Right cardiac atrium (tissue), 5 donors: ENCODE measurements at regions of chr7 and their contacts with region 1.

Region 1: GRCh38 chr7:25851332-25852210 is 300.4 kb upstream of the NFE2L3 start:
- DNase-seq: peak; percentile 79 to 93 (median 91)
- ATAC-seq: peak; percentile 70 to 80
- H3K4me3 ChIP-seq: no peak overlapping the region
- H3K27ac ChIP-seq: no peak overlapping the region
- H3K4me1 ChIP-seq: peaks cover 1% of the 10 kb centered on the region
- H3K27me3 ChIP-seq: no peaks in the 10 kb centered on the region

Region 2: DNA sequence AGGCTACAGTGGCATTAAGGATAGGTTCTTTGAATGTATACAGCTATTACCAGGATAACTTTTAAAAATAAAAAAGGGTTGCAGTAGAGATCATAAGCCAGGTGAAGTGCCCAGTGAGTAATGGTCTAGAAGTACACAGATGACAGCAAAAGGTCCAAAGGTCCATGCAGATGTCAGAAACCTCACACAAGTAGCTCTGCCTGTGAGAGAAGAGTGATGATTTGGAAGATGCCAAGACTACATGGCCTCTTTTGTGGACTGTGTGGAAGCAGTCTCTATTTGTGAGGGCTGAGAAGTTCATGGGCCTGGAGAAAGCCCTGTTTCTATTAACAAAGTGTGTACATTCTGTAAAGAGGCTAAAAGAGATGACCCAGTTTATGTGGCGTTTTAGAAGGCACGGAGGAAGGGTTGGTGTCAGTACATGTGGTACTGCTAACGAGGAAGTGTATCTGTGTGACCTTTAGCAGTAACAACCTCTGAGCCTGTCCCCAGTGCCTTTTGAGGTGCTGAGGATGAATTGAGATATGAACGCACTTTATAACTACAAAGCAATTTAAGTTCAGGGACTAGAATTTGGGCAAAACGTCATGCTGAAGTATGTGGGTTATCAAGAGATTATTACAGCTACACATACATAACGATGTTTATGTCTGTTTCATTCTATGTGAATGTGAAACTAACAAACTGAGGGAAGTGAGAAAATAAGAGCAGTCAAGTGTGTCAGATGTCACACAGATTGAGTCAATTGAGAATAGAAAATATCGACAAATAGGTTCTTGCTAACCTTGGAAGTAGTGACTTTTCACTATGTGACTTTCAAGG is 734.1 kb before region 1 on chr7:
- intact Hi-C with region 1: no loop called
- DNase-seq: no peak
- ATAC-seq: peak; percentile 36 to 38
- H3K4me3 ChIP-seq: no peak overlapping the region
- H3K27ac ChIP-seq: peak overlapping the region; percentile 19
- H3K4me1 ChIP-seq: peaks cover 3% of the 10 kb centered on the region
- H3K27me3 ChIP-seq: no peaks in the 10 kb centered on the region

Region 3: DNA sequence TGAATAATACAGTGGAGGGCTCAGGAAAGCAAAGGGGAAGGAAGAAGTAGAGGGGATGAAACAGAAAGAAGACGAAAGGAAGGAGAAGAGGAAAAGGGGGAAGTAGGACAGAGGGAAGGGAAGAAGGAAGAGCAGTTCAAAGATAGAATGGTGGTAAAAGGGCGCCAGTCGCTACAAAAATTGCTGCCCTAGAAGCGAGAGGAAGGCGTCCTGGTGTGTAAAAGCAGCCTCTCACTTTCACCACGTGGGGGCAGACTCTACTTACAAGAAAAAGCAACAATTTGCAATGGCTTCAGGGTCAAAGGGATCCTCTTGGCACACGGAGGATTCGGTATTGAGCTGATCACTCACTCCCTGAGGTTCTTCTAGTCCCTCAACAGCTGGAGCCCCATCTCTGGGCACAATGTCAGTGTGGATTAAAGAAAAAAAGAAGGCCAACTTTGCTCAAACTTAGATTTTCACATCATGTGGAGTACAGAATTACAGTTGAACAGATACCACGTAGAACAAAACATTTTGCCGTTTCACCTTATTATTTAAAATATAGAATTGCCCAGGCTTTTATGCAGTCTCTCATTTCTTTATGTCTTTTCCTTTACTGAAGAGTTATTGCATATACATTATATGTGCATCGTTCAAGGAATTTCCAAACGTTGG is 591.9 kb before region 1 on chr7:
- intact Hi-C with region 1: loop called in 3 of 4 experiments (anchors 5 to 10 kb)
- DNase-seq: peak in 2 of 3 donors; percentile 33 to 82
- ATAC-seq: peak; percentile 77 to 80
- H3K4me3 ChIP-seq: no peak overlapping the region
- H3K27ac ChIP-seq: no peak overlapping the region
- H3K4me1 ChIP-seq: no peaks in the 10 kb centered on the region
- H3K27me3 ChIP-seq: no peaks in the 10 kb centered on the region

Region 4: DNA sequence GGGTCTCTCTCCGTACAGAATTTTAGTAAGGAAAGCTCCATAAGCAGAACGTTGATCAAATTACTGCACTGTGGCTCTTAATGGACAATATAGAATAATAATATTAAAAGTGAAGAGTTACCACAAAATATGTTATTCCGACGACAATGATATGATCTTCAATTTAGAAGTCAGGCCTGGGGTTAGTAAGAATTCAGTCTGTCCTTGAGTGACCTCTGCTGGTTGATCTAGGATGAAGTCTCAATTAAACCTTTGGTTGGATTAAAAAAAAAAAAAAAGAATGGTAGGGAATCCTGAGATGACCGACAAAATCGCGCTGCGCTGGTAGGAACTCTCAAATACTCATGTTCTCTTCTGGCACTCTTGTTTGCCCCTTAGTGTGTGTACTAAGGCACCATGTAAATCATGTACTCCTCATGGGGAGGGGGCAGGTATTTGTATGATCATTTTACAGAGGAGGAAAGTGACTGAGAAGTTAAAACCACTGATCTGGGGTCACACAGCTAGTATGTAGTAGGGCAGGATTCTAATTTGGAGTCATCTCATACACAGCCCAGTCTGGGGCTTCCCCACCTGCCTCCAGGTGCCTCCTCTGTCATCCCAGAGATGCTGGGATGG is 462.0 kb before region 1 on chr7:
- intact Hi-C with region 1: loop called (anchors 2 to 5 kb)
- DNase-seq: peak in 1 of 3 donors; percentile 45
- ATAC-seq: peak in 1 of 2 donors; percentile 41
- H3K4me3 ChIP-seq: no peak overlapping the region
- H3K27ac ChIP-seq: no peak overlapping the region
- H3K4me1 ChIP-seq: peaks cover 2% of the 10 kb centered on the region
- H3K27me3 ChIP-seq: no peaks in the 10 kb centered on the region

Region 5: GRCh38 chr7:25565949-25566348 is 285.6 kb before region 1 on chr7:
- intact Hi-C with region 1: loop called in 3 of 4 experiments (anchors 2 to 5 kb)
- DNase-seq: peak; percentile 29 to 81 (median 68)
- ATAC-seq: no peak
- H3K4me3 ChIP-seq: no peak overlapping the region
- H3K27ac ChIP-seq: no peak overlapping the region
- H3K4me1 ChIP-seq: peaks cover 2% of the 10 kb centered on the region
- H3K27me3 ChIP-seq: no peaks in the 10 kb centered on the region

Region 6: DNA sequence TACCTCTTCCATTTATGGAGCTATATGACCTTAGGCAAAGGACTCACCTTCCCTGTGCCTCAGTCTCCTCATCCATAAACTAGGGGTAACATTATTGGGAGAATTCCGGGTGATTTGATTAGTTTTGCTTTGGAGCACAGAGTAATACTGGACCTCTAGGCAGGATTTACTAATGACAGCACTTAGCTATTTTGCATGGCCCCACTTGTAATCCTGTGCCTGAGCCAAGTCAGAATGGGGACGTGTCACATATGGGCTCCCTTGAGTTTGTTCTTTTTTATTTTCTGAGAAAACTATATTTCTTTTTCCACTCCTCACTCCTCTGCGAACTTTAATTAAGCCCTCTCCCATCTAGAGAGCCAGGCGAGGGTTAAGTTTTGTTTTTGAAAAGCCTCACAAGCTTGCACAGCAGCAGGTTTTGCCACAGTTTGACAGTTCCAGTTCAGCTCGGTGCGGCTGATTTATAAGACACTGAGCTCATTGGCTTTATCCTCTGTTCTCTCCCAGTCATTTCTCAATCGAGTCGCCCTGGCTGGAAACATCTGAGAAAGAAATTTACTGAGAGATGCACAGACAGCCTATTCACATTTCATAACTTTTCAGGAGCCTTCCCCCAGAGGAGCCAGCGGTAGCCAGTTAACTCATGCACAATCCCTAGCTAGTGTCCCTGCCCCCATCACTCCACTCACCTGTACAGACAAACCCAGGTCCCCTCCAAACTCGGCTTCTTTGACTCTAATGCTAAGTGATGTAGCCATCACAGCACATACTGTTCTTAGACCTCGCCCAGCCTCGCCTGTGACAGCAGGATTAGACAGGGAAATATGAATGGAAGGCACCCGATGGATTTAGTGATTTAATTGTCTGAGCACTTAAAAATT is 181.4 kb before region 1 on chr7:
- intact Hi-C with region 1: loop called in 3 of 4 experiments (anchors 10 kb)
- DNase-seq: peak in 2 of 3 donors; percentile 41 to 78
- ATAC-seq: peak; percentile 75 to 85
- H3K4me3 ChIP-seq: no peak overlapping the region
- H3K27ac ChIP-seq: peak overlapping the region; percentile 51
- H3K4me1 ChIP-seq: no peaks in the 10 kb centered on the region
- H3K27me3 ChIP-seq: no peaks in the 10 kb centered on the region

Region 7: DNA sequence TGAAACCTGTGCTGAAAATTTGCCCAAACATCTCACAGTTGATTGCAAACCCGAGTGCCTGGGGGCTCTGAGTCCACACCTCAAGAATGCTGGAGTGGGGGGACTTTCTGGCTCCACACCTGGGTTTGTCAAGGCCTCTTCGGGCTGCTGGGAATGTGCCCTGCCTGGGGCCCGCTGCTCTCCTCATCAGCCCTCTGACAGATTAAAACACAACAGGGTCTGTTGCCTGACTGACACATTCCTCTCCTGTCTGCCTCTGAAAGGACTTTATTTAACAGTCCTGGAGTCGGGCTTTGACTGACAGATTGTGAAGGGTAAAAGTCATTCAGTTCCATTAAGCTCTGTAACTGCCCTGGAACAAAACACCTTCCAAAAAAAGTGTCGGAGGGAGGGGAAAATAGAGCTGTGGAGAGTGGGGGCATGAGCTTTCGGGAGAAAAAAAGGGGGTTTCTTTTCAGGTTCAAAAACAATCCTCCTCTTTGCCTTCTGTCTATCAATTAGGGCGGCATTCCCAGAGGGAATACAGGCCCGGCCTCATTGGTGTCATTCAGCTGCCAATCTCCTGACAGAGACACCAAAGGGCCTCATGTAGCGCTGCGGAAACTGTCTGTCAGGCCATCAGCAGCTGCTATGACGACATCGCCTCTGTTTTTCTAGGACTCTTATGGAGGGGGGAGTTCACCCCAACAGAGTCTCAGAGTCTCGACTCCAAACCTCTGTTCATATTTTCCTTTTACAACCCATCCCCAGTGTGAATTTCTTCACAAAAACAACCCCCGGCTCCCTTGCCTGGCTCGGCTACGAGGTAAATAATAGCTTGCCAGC is 98.4 kb before region 1 on chr7:
- intact Hi-C with region 1: loop called in 1 of 4 experiments (anchors 10 kb)
- DNase-seq: peak; percentile 62 to 80 (median 78)
- ATAC-seq: peak; percentile 84 to 86
- H3K4me3 ChIP-seq: no peak overlapping the region
- H3K27ac ChIP-seq: peak overlapping the region; percentile 90
- H3K4me1 ChIP-seq: peaks cover 5% of the 10 kb centered on the region
- H3K27me3 ChIP-seq: no peaks in the 10 kb centered on the region

Region 8: GRCh38 chr7:25820432-25821040 is 31.0 kb before region 1 on chr7:
- intact Hi-C with region 1: no loop called
- DNase-seq: no peak
- ATAC-seq: no peak
- H3K4me3 ChIP-seq: no peak overlapping the region
- H3K27ac ChIP-seq: no peak overlapping the region
- H3K4me1 ChIP-seq: no peaks in the 10 kb centered on the region
- H3K27me3 ChIP-seq: no peaks in the 10 kb centered on the region